SK-N-SH (cell line): ENCODE measurements at regions of chr1 and their contacts with region 1.

Region 1: GRCh38 chr1:7680207-7680954 is 90.7 kb upstream of the VAMP3 start:
- DNase-seq: peak; percentile 93
- H3K4me3 ChIP-seq: peak overlapping the region; percentile 56 to 61
- H3K27ac ChIP-seq: peak overlapping the region in 1 of 2 experiments; percentile 87; a peak in 2 of 4 replicates
- H3K4me1 ChIP-seq: peaks cover 0 to 47% of the 10 kb centered on the region in 2 experiments; a peak in 1 of 4 replicates
- H3K27me3 ChIP-seq: no peaks in the 10 kb centered on the region
- CTCF ChIP-seq: no peak
- EP300 ChIP-seq: no peak
- RAD21 ChIP-seq: no peak

Region 2: GRCh38 chr1:7656557-7657215 is 23.7 kb before region 1 on chr1:
- CTCF ChIA-PET with region 1: no interaction called
- POLR2A ChIA-PET with region 1: no interaction called
- DNase-seq: no peak
- H3K4me3 ChIP-seq: no peak overlapping the region
- H3K27ac ChIP-seq: no peak overlapping the region
- H3K4me1 ChIP-seq: peaks cover 0 to 7% of the 10 kb centered on the region in 2 experiments; a peak in 1 of 4 replicates
- H3K27me3 ChIP-seq: no peaks in the 10 kb centered on the region
- CTCF ChIP-seq: no peak
- EP300 ChIP-seq: no peak
- RAD21 ChIP-seq: no peak

Region 3: GRCh38 chr1:7704214-7705047 is 24.1 kb after region 1 on chr1:
- CTCF ChIA-PET with region 1: interaction called, 6 read pairs
- POLR2A ChIA-PET with region 1: interaction called, 34 read pairs
- DNase-seq: peak; percentile 100
- H3K4me3 ChIP-seq: peak overlapping the region in 1 of 2 experiments; percentile 64; a peak in 2 of 4 replicates
- H3K27ac ChIP-seq: peak overlapping the region in 1 of 2 experiments; percentile 74; a peak in 1 of 4 replicates
- H3K4me1 ChIP-seq: peaks cover 0 to 8% of the 10 kb centered on the region in 2 experiments; a peak in 1 of 4 replicates
- H3K27me3 ChIP-seq: peaks cover 6% of the 10 kb centered on the region; the same call in 1 of the 2 replicates
- CTCF ChIP-seq: no peak
- EP300 ChIP-seq: no peak
- RAD21 ChIP-seq: no peak